Mammary epithelial cell (primary cell): ENCODE measurements at regions of chr1 and their contacts with region 1.

Region 1: DNA sequence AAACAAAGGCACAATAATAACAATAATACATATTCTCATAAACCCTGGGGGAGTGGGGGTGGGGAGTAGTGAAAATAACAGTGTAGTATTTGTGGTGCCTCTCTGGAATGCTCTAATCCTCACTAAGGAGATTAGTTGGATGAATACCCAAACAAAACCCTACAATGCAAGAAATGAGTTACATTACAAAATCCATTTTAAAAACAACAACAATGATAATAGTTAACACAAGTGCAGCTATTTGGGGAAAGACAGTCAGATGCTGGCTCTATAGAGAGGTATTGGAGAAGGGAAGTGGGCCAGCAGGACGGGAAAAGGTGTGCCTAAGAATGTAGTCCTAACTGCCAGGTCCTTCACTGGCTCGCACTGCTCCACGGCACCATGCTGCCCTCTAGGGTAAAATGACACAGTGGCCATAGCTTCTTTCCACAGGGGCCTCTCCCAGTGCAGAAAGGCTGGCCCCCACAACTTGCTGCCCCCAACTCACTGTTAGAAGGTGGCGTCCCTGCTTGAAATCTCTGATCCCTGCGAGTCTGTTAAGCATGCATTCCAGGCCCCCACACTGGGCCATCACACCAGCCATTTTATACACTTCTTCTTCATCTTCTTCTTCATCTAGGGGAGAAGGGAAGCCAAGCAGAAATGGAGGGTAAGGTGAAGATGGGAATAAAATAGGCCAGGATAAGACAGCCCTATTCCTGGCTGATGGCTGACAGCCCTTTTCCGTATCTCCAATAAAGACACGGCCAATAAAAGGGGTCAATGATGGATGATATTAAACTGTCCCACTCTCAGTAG is 113.8 kb downstream of the UBR4 start:
- DNase-seq: peak; percentile 39
- H3K4me3 ChIP-seq: no peak overlapping the region
- H3K27ac ChIP-seq: no peak overlapping the region
- H3K4me1 ChIP-seq: no peaks in the 10 kb centered on the region
- H3K27me3 ChIP-seq: no peaks in the 10 kb centered on the region
- CTCF ChIP-seq: peak; percentile 65 to 82

Region 2: GRCh38 chr1:18703041-18703641 is 393.1 kb before region 1 on chr1:
- CTCF ChIA-PET with region 1: no interaction called
- dilution Hi-C with region 1: loop called (anchors 25 kb)
- in situ Hi-C with region 1: no loop called
- intact Hi-C with region 1: no loop called
- DNase-seq: peak; percentile 50
- H3K4me3 ChIP-seq: peak overlapping the region in 1 of 3 experiments; percentile 20
- H3K27ac ChIP-seq: no peak overlapping the region
- H3K4me1 ChIP-seq: no peaks in the 10 kb centered on the region
- H3K27me3 ChIP-seq: peaks cover 2% of the 10 kb centered on the region
- CTCF ChIP-seq: no peak

Region 3: GRCh38 chr1:18902523-18903290 is 193.5 kb before region 1 on chr1 and contains the start of gene ALDH4A1:
- CTCF ChIA-PET with region 1: interaction called, 4 read pairs
- dilution Hi-C with region 1: no loop called
- in situ Hi-C with region 1: no loop called
- intact Hi-C with region 1: loop called (anchors 1 kb)
- DNase-seq: peak; percentile 98
- H3K4me3 ChIP-seq: peak within 1 kb of the TSS; percentile 74 to 79 (median 77)
- H3K27ac ChIP-seq: peak within 1 kb of the TSS; percentile 88
- H3K4me1 ChIP-seq: peaks cover 38% of the 10 kb centered on the region
- H3K27me3 ChIP-seq: no peaks in the 10 kb centered on the region
- CTCF ChIP-seq: peak in 1 of 2 donors; percentile 10
- total RNA-seq, gene ALDH4A1: 24.0 to 41.4 TPM

Region 4: GRCh38 chr1:18972531-18972930 is 123.7 kb before region 1 on chr1:
- CTCF ChIA-PET with region 1: no interaction called
- dilution Hi-C with region 1: no loop called
- in situ Hi-C with region 1: no loop called
- intact Hi-C with region 1: loop called (anchors 1 kb)
- DNase-seq: peak; percentile 52
- H3K4me3 ChIP-seq: no peak overlapping the region
- H3K27ac ChIP-seq: no peak overlapping the region
- H3K4me1 ChIP-seq: peaks cover 4% of the 10 kb centered on the region
- H3K27me3 ChIP-seq: no peaks in the 10 kb centered on the region
- CTCF ChIP-seq: peak; percentile 18 to 51

Region 5: DNA sequence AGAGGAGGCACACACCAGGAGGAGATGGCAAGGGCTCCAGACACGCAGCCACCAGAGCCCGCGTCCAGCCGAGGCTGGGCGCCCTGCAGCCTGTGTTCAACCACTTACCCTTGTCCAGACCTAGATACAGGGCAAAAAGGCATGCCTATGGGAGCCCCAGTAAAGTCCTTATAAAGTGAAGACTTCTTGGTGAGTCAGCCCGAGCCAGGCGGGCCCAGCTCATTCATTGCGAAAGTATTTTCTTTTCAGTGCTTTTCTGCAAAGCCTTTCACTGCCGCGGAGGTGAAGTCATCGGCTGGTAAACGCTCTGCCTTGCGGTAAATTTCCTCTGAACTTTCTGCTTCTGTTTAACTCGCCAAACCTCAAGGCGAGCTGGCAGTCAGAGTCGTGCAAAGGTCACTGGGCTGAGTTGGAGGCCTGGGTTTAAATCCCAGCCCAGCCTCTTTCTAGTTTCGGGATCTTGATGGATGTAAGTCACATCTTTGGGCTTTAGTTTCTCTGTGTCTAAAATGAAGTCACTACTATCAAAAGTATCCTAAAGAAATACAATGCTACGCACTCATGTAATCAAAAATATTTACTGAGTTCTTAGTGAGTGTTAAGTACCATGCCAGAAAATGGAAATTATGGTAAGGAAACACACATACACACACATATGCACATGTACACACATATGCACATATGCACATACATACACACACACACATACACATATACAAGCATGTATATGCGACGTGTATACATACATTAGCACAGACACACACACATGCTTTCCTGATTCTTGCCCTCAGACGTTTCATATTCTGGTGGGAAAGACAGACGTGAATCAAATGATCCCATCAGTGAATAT is 85.0 kb before region 1 on chr1:
- CTCF ChIA-PET with region 1: no interaction called
- dilution Hi-C with region 1: no loop called
- in situ Hi-C with region 1: no loop called
- intact Hi-C with region 1: loop called (anchors 1 kb)
- DNase-seq: peak; percentile 98
- H3K4me3 ChIP-seq: no peak overlapping the region
- H3K27ac ChIP-seq: peak overlapping the region; percentile 71
- H3K4me1 ChIP-seq: peaks cover 33% of the 10 kb centered on the region
- H3K27me3 ChIP-seq: no peaks in the 10 kb centered on the region
- CTCF ChIP-seq: no peak

Region 6: GRCh38 chr1:19049128-19049768 is 47.0 kb before region 1 on chr1:
- CTCF ChIA-PET with region 1: no interaction called
- dilution Hi-C with region 1: no loop called
- in situ Hi-C with region 1: no loop called
- intact Hi-C with region 1: no loop called
- DNase-seq: no peak
- H3K4me3 ChIP-seq: no peak overlapping the region
- H3K27ac ChIP-seq: no peak overlapping the region
- H3K4me1 ChIP-seq: peaks cover 3% of the 10 kb centered on the region
- H3K27me3 ChIP-seq: no peaks in the 10 kb centered on the region
- CTCF ChIP-seq: no peak

Region 7: DNA sequence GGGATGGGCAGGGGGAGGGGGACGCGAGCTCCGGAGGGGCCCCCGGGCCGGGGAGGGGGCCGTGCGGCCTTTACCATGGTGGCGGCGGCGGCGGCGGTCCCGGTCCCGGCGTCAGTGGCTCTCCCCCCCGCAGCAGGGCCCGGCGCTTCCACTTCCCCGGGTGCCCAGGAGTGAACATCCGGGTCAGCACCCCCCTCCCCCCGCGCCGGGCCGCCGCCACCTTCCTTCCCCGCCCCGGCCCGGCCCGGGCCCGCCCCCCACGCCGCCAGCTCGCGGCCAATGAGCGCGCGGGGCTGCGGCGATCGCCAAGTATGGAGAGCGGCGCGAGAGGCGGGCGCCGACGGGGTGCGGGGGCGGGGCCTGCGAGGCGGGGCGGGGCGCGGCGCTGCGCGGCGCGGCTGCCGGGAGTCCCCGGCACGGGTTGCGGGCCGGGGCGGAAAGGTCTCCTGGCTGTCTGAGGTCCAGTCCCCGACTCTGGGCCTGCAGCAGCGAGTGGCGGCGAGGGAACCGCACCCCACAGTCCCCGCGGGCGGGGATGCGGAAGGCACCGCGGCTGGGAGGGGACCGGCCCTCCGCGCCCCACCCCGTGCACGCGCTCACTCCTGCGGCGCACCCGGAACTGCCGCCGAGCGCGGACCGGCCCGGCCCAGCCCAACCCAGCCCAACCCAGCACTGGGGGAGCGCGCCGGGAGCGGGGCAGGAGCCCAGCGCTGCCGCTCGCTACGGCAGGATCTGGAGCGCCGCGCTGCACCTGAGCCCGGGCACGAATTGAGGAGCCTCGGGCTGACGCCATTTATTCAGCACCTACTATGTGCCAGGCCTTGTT is 389.3 kb after region 1 on chr1 and contains the start of gene CAPZB:
- CTCF ChIA-PET with region 1: no interaction called
- dilution Hi-C with region 1: no loop called
- in situ Hi-C with region 1: no loop called
- intact Hi-C with region 1: no loop called
- DNase-seq: peak; percentile 89
- H3K4me3 ChIP-seq: peak within 1 kb of the TSS; percentile 85 to 99 (median 92)
- H3K27ac ChIP-seq: peak within 1 kb of the TSS; percentile 84
- H3K4me1 ChIP-seq: peaks cover 30% of the 10 kb centered on the region
- H3K27me3 ChIP-seq: no peaks in the 10 kb centered on the region
- CTCF ChIP-seq: no peak
- total RNA-seq, gene CAPZB: 134 to 309 TPM